Activated naive CD4-positive, alpha-beta T cell treated with anti-CD3 and anti-CD28 coated beads for 36 hours (primary cell): ENCODE measurements at regions of chr9 and their contacts with region 1.

Region 1: DNA sequence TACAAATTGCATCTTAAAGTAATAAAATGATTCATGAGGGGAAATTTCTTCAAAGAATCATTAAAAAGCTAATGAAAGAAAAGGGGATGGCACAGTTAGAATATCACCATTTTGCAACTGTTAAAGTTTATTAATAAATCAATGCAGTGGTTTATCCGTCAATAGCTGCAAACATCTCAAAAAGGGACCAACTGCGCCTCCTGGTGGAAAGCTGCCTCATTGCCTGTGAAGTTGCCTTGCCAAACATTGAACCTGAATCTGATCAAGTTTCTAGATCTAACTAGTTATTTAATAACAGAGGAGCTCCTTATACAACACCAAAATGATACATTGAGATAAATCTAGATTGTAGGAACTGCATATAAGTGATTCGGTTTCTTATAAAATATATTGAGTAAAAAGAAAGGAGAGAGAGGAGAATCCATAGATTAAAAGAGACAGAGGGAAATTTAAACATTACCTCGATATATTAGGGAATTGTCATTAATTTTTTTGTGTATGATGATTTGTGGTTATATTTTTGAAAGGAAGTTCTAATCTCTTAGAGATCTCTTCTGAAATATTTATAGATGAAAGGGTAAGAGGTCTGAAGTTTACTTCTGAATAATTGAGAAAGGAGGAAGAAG is 6.9 kb upstream of the NDUFB6 start:
- DNase-seq: peak; percentile 89
- H3K4me3 Mint-ChIP-seq: no peak overlapping the region
- H3K27ac Mint-ChIP-seq: no peak overlapping the region
- H3K4me1 Mint-ChIP-seq: no peaks in the 10 kb centered on the region
- H3K27me3 Mint-ChIP-seq: peaks cover 13% of the 10 kb centered on the region

Region 2: GRCh38 chr9:31839273-31839672 is 740.5 kb before region 1 on chr9:
- CTCF ChIA-PET with region 1: no interaction called
- intact Hi-C with region 1: no loop called
- DNase-seq: no peak
- H3K4me3 Mint-ChIP-seq: no peak overlapping the region
- H3K27ac Mint-ChIP-seq: no peak overlapping the region
- H3K4me1 Mint-ChIP-seq: no peaks in the 10 kb centered on the region
- H3K27me3 Mint-ChIP-seq: no peaks in the 10 kb centered on the region

Region 3: DNA sequence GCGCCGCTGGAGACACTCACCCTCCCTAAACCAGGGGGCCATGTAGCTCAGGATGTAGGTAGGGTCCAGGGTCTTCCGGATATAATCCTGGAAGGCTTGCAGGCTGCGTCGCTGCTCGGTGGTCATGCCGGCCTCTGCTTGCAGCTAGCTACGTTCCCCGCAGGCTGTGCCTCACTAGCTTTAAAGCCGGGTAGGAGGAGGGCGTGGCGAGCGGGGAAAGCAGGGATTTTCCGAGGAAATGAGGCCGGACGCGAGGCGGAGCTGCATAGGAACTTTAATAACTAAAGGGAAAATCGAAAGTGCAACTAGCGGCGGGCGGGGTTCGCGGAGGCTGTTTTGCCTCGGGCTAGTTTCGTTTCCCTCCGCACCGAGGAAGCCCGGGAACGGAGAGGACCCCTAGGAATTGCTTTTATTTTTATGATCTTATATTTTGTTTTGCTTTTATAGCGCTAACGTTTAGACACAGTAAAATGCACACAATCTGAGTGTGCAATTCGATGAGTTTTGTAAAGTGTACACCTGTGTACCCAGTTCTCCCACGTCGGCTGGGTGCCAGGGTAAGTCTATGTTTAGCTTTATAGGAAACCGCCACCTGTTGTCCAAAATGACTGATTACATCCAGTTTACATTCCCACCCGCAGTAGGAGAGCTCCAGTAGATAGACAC is 53.6 kb before region 1 on chr9 and contains the start of gene RIGI:
- CTCF ChIA-PET with region 1: interaction called, 13 read pairs
- intact Hi-C with region 1: no loop called
- DNase-seq: peak; percentile 90
- H3K4me3 Mint-ChIP-seq: peak within 1 kb of the TSS; percentile 77
- H3K27ac Mint-ChIP-seq: peak within 1 kb of the TSS; percentile 84
- H3K4me1 Mint-ChIP-seq: peaks cover 32% of the 10 kb centered on the region
- H3K27me3 Mint-ChIP-seq: no peaks in the 10 kb centered on the region
- total RNA-seq, gene RIGI: 7.5 to 8.4 TPM

Region 4: DNA sequence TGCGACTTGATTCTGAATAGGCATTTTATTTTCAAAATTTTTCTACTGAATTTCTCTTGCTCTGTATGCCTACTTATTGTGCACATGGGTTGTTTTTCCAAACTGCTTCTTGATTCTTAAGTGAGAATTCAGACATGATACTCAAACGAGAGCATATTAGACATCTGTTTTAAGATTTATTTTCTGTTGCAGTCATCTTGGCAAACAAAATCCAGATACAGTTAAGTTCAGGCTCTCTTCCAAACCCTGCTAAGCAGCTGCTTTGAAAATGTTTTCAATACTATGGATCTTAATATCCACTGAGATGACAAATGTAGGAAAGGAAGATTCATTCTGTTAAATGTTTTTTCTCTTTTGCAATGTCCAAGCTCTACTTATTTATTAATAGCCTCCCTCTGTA is 208.0 kb after region 1 on chr9:
- CTCF ChIA-PET with region 1: no interaction called
- intact Hi-C with region 1: no loop called
- DNase-seq: no peak
- H3K4me3 Mint-ChIP-seq: no peak overlapping the region
- H3K27ac Mint-ChIP-seq: no peak overlapping the region
- H3K4me1 Mint-ChIP-seq: no peaks in the 10 kb centered on the region
- H3K27me3 Mint-ChIP-seq: peaks cover 26% of the 10 kb centered on the region